ENCODE measurements at regions of chr18 and their contacts with region 1.

Region 1: DNA sequence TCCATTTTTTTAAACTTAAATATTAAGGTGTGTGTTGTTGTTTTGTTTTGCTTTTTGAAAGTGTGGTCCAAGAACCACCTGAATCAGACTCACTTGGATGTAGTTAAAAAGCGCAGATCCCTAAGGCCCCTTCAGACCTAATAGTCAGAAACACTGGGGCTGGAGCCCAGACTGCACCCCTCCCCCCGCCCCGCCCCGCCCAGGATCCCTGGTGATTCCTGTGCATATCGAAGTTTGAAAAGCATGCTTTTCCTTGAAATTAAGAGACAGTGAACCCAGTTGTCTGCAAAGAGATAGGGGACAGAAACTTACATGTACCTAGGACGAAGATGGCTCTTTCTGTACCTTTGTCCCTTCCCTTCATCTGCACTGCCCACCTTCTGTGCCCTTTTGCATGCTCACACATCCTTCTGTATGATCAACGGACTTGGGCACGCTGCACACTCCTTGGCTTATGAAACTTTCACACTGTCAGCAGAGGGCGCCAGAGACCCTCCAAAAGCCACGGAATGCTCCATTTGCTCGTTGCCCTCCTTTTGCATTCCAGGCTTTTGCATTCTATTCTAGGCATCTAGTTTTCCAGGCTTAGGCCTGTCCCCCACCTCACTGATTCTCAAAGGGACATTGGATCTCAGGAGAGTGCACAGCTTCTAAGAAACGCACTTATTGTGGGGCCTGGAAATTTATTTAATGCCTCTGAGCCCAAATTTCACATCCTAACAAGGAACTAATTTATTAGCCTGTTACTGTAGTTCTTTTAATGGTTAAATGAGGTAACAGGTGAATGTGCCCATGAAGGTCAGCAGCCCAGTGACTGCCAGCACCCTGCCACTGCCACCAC is 32.8 kb upstream of the SLC14A1 start:
- DNase-seq: peak; percentile 88
- ATAC-seq: no peak
- H3K4me3 Mint-ChIP-seq: no peak overlapping the region
- H3K27ac Mint-ChIP-seq: no peak overlapping the region
- H3K4me1 Mint-ChIP-seq: peaks cover 49% of the 10 kb centered on the region
- H3K27me3 Mint-ChIP-seq: no peaks in the 10 kb centered on the region
- CTCF ChIP-seq: peak; percentile 88

Region 2: GRCh38 chr18:45670281-45670962 is 20.8 kb before region 1 on chr18:
- CTCF ChIA-PET with region 1: interaction called, 231 read pairs
- POLR2A ChIA-PET with region 1: interaction called, 23 read pairs
- intact Hi-C with region 1: loop called (anchors 1 kb)
- DNase-seq: peak; percentile 78
- ATAC-seq: peak; percentile 49
- H3K4me3 Mint-ChIP-seq: peak overlapping the region; percentile 53
- H3K27ac Mint-ChIP-seq: peak overlapping the region; percentile 94
- H3K4me1 Mint-ChIP-seq: peaks cover 67% of the 10 kb centered on the region
- H3K27me3 Mint-ChIP-seq: no peaks in the 10 kb centered on the region
- CTCF ChIP-seq: no peak

Region 3: GRCh38 chr18:45874491-45875184 is 183.4 kb after region 1 on chr18:
- CTCF ChIA-PET with region 1: interaction called, 84 read pairs
- POLR2A ChIA-PET with region 1: interaction called, 3 read pairs
- intact Hi-C with region 1: loop called (anchors 2 kb)
- DNase-seq: peak; percentile 91
- ATAC-seq: peak; percentile 91
- H3K4me3 Mint-ChIP-seq: peak overlapping the region; percentile 8
- H3K27ac Mint-ChIP-seq: peak overlapping the region; percentile 92
- H3K4me1 Mint-ChIP-seq: peaks cover 41% of the 10 kb centered on the region
- H3K27me3 Mint-ChIP-seq: no peaks in the 10 kb centered on the region
- CTCF ChIP-seq: no peak

Region 4: GRCh38 chr18:45910405-45911023 is 219.3 kb after region 1 on chr18:
- CTCF ChIA-PET with region 1: interaction called, 11 read pairs
- POLR2A ChIA-PET with region 1: no interaction called
- intact Hi-C with region 1: no loop called
- DNase-seq: peak; percentile 73
- ATAC-seq: peak; percentile 94
- H3K4me3 Mint-ChIP-seq: no peak overlapping the region
- H3K27ac Mint-ChIP-seq: no peak overlapping the region
- H3K4me1 Mint-ChIP-seq: no peaks in the 10 kb centered on the region
- H3K27me3 Mint-ChIP-seq: no peaks in the 10 kb centered on the region
- CTCF ChIP-seq: peak; percentile 88

Measured in activated CD8-positive, alpha-beta T cell treated with anti-CD3 and anti-CD28 coated beads for 36 hours (primary cell).